AG04449 (cell line): ENCODE measurements at regions of chr16 and their contacts with region 1.

Region 1: GRCh38 chr16:57084257-57084770 is 8.1 kb upstream of the CPNE2 start:
- DNase-seq: no peak
- H3K4me3 ChIP-seq: no peak overlapping the region
- CTCF ChIP-seq: peak; percentile 99

Region 2: GRCh38 chr16:57061084-57061905 is 23.0 kb before region 1 on chr16:
- CTCF ChIA-PET with region 1: interaction called, 29 read pairs
- POLR2A ChIA-PET with region 1: no interaction called
- DNase-seq: no peak
- H3K4me3 ChIP-seq: no peak overlapping the region
- CTCF ChIP-seq: no peak

Region 3: GRCh38 chr16:57071831-57072582 is 12.3 kb before region 1 on chr16:
- CTCF ChIA-PET with region 1: interaction called, 60 read pairs
- POLR2A ChIA-PET with region 1: no interaction called
- DNase-seq: no peak
- H3K4me3 ChIP-seq: no peak overlapping the region
- CTCF ChIP-seq: no peak

Region 4: DNA sequence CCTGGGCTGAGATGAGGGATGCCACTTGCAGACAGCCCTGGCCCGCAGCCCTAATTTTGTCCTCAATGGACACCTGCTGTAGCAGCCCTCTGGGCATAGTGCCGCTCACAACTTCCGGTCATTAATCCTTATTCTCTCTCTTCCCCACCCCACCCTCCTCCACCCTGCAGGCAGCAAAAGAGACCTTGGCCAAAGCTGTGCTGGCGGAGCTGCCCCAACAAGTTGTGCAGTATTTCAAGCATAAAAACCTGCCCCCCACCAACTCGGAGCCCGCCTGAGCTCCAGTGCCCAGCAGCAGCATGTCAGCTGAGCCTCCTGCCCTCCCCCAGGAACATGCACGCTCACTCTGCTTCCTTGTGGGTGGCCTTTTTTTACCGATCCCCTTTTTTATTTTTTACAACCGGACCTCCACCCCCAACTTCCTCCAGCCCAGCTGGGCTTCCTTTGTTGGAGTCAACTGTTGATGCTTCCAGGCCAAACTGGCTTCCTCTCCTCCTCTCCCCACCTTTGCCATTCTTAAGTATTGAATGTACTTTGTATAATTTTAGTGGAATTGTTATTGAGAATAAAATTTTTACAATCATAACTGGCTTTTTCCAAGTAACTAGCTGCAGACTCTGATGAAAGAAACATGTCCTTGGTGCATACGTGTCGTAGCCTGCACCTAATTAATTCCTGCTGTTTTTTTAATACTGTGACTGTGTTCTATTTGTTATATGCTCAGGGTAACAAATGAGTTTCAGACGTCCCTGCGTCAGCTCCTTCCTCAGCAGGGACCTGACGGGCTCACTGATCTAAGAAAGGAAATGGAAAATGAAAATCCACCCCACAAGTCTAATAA is 63.3 kb after region 1 on chr16:
- CTCF ChIA-PET with region 1: interaction called, 18 read pairs
- POLR2A ChIA-PET with region 1: no interaction called
- DNase-seq: no peak
- H3K4me3 ChIP-seq: no peak overlapping the region
- CTCF ChIP-seq: no peak

Region 5: GRCh38 chr16:57167953-57168352 is 83.6 kb after region 1 on chr16:
- CTCF ChIA-PET with region 1: interaction called, 197 read pairs
- POLR2A ChIA-PET with region 1: no interaction called
- DNase-seq: peak; percentile 40
- H3K4me3 ChIP-seq: no peak overlapping the region
- CTCF ChIP-seq: peak; percentile 60

Region 6: GRCh38 chr16:57289391-57290257 is 205.3 kb after region 1 on chr16:
- CTCF ChIA-PET with region 1: interaction called, 10 read pairs
- POLR2A ChIA-PET with region 1: no interaction called
- DNase-seq: no peak
- H3K4me3 ChIP-seq: no peak overlapping the region
- CTCF ChIP-seq: no peak

Region 7: GRCh38 chr16:57422026-57422944 is 338.0 kb after region 1 on chr16:
- CTCF ChIA-PET with region 1: interaction called, 22 read pairs
- POLR2A ChIA-PET with region 1: no interaction called
- DNase-seq: peak; percentile 5
- H3K4me3 ChIP-seq: no peak overlapping the region
- CTCF ChIP-seq: peak; percentile 73